Activated naive CD4-positive, alpha-beta T cell treated with anti-CD3 and anti-CD28 coated beads, Interleukin-2, amount 10 ng/mL, durations not matched to agents 7 days and 5 days (primary cell): ENCODE measurements at regions of chr6 and their contacts with region 1.

Region 1: GRCh38 chr6:29696155-29697125 is 15.5 kb upstream of the ZFP57 start:
- DNase-seq: peak; percentile 34
- H3K4me3 Mint-ChIP-seq: no peak overlapping the region
- H3K27ac Mint-ChIP-seq: no peak overlapping the region
- H3K4me1 Mint-ChIP-seq: no peaks in the 10 kb centered on the region
- H3K27me3 Mint-ChIP-seq: peaks cover 39% of the 10 kb centered on the region

Region 2: DNA sequence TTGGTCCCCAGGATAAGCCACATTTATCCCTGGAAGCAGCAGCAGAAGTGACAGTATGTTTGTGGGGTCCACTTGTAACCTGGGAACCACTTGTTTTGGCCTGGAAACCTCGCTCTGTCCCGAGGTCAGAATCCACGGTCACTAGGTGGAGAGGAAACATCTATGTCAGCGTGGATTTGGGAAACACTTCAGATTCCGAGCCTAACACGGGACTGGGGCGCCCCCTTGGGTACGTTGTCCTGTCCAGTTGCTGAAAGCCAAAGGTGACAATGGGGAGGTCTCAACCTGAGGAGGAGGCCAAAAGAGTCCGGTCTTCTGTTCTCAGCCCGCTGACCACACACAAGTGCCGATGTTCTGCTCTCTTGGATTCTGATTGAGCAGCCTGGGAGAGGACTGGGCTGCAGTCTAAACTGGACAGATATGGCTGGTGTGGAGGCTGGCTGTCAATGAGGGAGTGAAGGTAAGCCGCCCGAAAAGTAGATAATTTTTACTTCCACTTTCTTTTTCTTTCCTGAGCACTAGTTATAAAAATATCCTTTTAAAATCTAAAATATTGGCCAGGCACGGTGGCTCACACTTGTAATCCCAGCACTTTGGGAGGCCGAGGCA is 10.6 kb before region 1 on chr6:
- CTCF ChIA-PET with region 1: interaction called, 10 read pairs
- DNase-seq: no peak
- H3K4me3 Mint-ChIP-seq: no peak overlapping the region
- H3K27ac Mint-ChIP-seq: no peak overlapping the region
- H3K4me1 Mint-ChIP-seq: peaks cover 7% of the 10 kb centered on the region
- H3K27me3 Mint-ChIP-seq: peaks cover 36% of the 10 kb centered on the region